ENCODE measurements at regions of chr7 and their contacts with region 1.

Region 1: GRCh38 chr7:101138213-101138870 is 11.4 kb downstream of the SERPINE1 start:
- H3K4me3 ChIP-seq: peak overlapping the region; percentile 30
- H3K27ac ChIP-seq: no peak overlapping the region; the same call in 1 of the 2 replicates
- H3K4me1 ChIP-seq: 0 out of 2 replicates have a peak, but pooled peaks cover 5% of the 10 kb centered on the region
- CTCF ChIP-seq: peak; percentile 74; the same call in 1 of the 2 replicates

Region 2: GRCh38 chr7:101094416-101095375 is 43.6 kb before region 1 on chr7:
- CTCF ChIA-PET with region 1: interaction called, 15 read pairs
- POLR2A ChIA-PET with region 1: interaction called, 4 read pairs
- H3K4me3 ChIP-seq: no peak overlapping the region
- H3K27ac ChIP-seq: no peak overlapping the region
- H3K4me1 ChIP-seq: no peaks in the 10 kb centered on the region
- CTCF ChIP-seq: peak; percentile 65; the same call in 1 of the 2 replicates

Region 3: DNA sequence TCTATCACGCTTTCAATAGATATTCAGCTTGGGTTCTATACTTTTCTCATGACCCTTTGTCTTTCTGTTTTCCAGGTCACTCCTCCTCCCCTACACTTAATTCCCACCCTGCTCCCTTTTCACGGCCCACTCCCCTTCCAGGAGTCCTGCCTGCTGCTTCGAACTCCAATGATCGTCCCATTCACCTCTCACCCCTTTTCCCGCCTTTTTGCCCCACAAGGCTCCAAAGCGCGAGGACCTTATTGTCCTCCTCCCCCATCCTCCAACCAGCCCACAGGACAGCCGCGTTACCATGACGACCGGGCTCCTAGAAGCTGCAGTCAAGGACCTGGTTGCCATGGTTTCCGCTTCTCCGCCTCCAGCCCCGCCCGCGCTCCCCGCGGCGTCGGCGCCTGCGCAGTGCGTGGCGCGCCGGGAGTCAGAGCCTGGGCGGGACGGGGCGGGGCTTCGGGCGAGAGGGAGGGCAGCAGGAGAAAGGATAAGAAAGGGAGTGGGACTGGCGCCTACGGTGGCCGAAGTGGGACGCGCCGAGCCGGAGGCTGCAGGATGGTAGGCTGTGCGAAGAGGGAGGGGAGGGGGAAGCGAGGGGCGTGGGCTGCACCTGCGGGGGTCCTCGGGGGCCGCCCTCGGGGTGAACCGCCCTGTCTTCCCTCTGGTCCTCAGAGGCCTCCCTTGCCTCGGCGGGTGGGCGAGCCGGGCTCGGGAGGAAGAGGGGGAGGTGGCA is 15.8 kb after region 1 on chr7 and contains the start of gene AP1S1:
- CTCF ChIA-PET with region 1: interaction called, 84 read pairs
- POLR2A ChIA-PET with region 1: interaction called, 4 read pairs
- H3K4me3 ChIP-seq: peak within 1 kb of the TSS; percentile 80
- H3K27ac ChIP-seq: peak within 1 kb of the TSS; percentile 41; the same call in 1 of the 2 replicates
- H3K4me1 ChIP-seq: peaks cover 5% of the 10 kb centered on the region; the same call in 1 of the 2 replicates
- CTCF ChIP-seq: no peak

Region 4: DNA sequence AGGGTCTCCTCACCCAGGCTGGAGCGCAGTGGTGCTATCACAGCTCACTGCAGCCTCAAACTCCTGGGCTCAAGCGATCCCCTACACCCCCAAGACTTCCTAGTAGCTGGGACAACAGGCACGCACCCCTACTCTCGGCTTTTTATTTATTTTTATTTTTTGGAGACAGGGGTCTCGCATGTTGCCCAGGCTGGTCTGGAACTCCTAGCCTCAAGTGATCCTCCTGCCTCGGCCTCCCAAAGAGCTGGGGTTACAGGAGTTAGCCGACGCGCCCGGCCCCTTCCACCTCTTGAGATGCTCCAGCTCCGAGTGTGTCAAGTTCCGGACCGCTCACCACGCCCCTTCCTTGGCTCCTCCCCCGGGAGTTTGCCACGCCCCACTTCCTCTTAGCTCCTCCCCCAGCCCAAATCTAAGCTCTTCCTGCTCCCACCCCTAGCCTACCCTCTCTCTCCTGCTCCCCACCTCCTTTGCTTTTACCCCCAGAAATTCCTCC is 35.5 kb after region 1 on chr7:
- CTCF ChIA-PET with region 1: interaction called, 40 read pairs
- POLR2A ChIA-PET with region 1: no interaction called
- H3K4me3 ChIP-seq: no peak overlapping the region
- H3K27ac ChIP-seq: no peak overlapping the region
- H3K4me1 ChIP-seq: peaks cover 7% of the 10 kb centered on the region; the same call in 1 of the 2 replicates
- CTCF ChIP-seq: no peak

Region 5: DNA sequence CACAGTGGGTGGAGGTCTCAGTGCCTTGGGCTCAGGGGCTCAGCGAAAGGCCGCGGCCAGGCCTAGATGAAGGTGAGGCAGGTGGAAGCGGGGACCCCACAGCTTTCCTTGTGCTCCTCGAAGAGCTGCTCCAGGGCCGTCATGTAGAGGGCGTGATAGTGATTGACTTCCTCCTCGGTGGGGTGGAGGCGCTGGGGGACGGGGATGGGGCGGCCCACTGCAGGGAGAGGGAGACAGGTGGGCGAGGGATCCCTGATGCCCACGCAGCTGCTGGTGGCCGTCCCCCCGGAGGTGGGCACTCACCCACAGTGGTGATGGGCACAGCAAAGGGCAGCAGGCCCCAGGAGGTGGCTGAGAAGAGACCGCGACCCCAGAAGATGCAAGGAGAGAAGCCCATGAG is 57.5 kb after region 1 on chr7:
- CTCF ChIA-PET with region 1: interaction called, 131 read pairs
- POLR2A ChIA-PET with region 1: interaction called, 6 read pairs
- H3K4me3 ChIP-seq: no peak overlapping the region
- H3K27ac ChIP-seq: no peak overlapping the region
- H3K4me1 ChIP-seq: no peaks in the 10 kb centered on the region
- CTCF ChIP-seq: no peak

Region 6: GRCh38 chr7:101287032-101287431 is 148.7 kb after region 1 on chr7:
- CTCF ChIA-PET with region 1: interaction called, 106 read pairs
- POLR2A ChIA-PET with region 1: no interaction called
- H3K4me3 ChIP-seq: no peak overlapping the region
- H3K27ac ChIP-seq: no peak overlapping the region
- H3K4me1 ChIP-seq: no peaks in the 10 kb centered on the region
- CTCF ChIP-seq: no peak

Region 7: GRCh38 chr7:101453617-101454016 is 315.3 kb after region 1 on chr7:
- CTCF ChIA-PET with region 1: no interaction called
- POLR2A ChIA-PET with region 1: no interaction called
- H3K4me3 ChIP-seq: no peak overlapping the region
- H3K27ac ChIP-seq: no peak overlapping the region
- H3K4me1 ChIP-seq: no peaks in the 10 kb centered on the region
- CTCF ChIP-seq: no peak